ENCODE measurements at regions of chr1 and their contacts with region 1.

Region 1: GRCh38 chr1:202135221-202135721 is 9.3 kb downstream of the ARL8A start:
- DNase-seq: peak; percentile 71
- ATAC-seq: peak; percentile 94
- H3K4me3 ChIP-seq: no peak overlapping the region
- H3K4me3 Mint-ChIP-seq: no peak overlapping the region
- H3K27ac ChIP-seq: no peak overlapping the region
- H3K27ac Mint-ChIP-seq: no peak overlapping the region
- H3K4me1 ChIP-seq: no peaks in the 10 kb centered on the region
- H3K4me1 Mint-ChIP-seq: peaks cover 14% of the 10 kb centered on the region
- H3K27me3 ChIP-seq: no peaks in the 10 kb centered on the region
- H3K27me3 Mint-ChIP-seq: no peaks in the 10 kb centered on the region
- CTCF ChIP-seq: peak; percentile 87

Region 2: DNA sequence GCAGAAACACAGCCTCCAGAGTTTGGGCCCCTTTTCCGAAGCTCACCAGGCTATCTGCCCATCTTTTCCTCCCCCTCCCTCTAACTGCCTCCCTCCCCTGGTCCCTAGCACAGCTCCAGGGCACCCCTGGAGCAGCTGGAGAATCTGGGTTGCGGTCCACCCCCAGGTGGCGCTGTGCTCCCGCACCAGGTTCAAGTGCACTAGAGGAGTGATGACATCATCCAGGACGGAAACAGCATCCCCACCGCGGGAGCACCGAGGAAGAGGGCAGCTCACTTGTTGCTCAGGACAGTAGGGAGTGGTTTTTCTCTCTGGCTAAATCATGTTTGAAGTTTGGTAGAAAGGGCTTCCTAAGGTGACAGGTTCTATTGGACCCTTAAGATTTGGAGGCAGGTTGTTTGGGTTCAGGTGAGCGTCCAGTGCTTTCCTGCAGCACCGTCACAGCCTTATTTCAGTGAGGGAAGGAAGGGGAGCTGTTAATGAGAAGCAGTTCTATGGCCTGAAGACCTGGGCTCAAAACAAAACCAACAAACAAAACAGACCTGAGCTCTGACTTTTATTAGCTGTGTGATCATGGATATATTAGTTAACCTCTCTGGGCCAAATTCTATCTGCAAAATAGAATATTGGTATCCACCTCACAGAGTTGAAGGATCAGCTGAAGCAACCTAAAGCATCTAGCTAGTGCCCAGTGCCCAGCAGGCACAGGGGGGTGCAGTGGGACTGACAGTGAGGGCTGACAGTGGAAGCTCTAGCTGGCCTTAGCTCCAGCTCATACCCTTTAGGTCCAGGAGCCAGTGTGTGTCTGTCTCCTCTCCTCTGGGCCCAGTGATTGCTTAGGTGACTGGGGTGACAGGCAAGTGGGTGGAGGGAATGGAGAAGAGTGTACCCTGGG is 239.1 kb before region 1 on chr1:
- CTCF ChIA-PET with region 1: interaction called, 6 read pairs
- POLR2A ChIA-PET with region 1: no interaction called
- intact Hi-C with region 1: loop called (anchors 1 kb)
- DNase-seq: peak; percentile 72
- ATAC-seq: peak; percentile 64
- H3K4me3 ChIP-seq: no peak overlapping the region
- H3K4me3 Mint-ChIP-seq: peak overlapping the region; percentile 37
- H3K27ac ChIP-seq: no peak overlapping the region
- H3K27ac Mint-ChIP-seq: no peak overlapping the region
- H3K4me1 ChIP-seq: peaks cover 0 to 4% of the 10 kb centered on the region in 2 donors
- H3K4me1 Mint-ChIP-seq: peaks cover 5% of the 10 kb centered on the region
- H3K27me3 ChIP-seq: peaks cover 0 to 20% (median 2%) of the 10 kb centered on the region in 4 experiments
- H3K27me3 Mint-ChIP-seq: peaks cover 37% of the 10 kb centered on the region
- CTCF ChIP-seq: peak; percentile 76

Region 3: GRCh38 chr1:201999625-202000238 is 135.5 kb before region 1 on chr1:
- CTCF ChIA-PET with region 1: interaction called, 22 read pairs
- POLR2A ChIA-PET with region 1: no interaction called
- intact Hi-C with region 1: no loop called
- DNase-seq: peak; percentile 47
- ATAC-seq: peak; percentile 49
- H3K4me3 ChIP-seq: no peak overlapping the region
- H3K4me3 Mint-ChIP-seq: no peak overlapping the region
- H3K27ac ChIP-seq: no peak overlapping the region
- H3K27ac Mint-ChIP-seq: no peak overlapping the region
- H3K4me1 ChIP-seq: no peaks in the 10 kb centered on the region
- H3K4me1 Mint-ChIP-seq: no peaks in the 10 kb centered on the region
- H3K27me3 ChIP-seq: no peaks in the 10 kb centered on the region
- H3K27me3 Mint-ChIP-seq: no peaks in the 10 kb centered on the region
- CTCF ChIP-seq: peak; percentile 71

Region 4: GRCh38 chr1:202009326-202010179 is 125.7 kb before region 1 on chr1:
- CTCF ChIA-PET with region 1: interaction called, 19 read pairs
- POLR2A ChIA-PET with region 1: no interaction called
- intact Hi-C with region 1: loop called (anchors 1 kb)
- DNase-seq: peak; percentile 67
- ATAC-seq: peak; percentile 60
- H3K4me3 ChIP-seq: no peak overlapping the region
- H3K4me3 Mint-ChIP-seq: no peak overlapping the region
- H3K27ac ChIP-seq: no peak overlapping the region
- H3K27ac Mint-ChIP-seq: no peak overlapping the region
- H3K4me1 ChIP-seq: peaks cover 0 to 7% of the 10 kb centered on the region in 2 donors
- H3K4me1 Mint-ChIP-seq: peaks cover 2% of the 10 kb centered on the region
- H3K27me3 ChIP-seq: no peaks in the 10 kb centered on the region
- H3K27me3 Mint-ChIP-seq: no peaks in the 10 kb centered on the region
- CTCF ChIP-seq: peak; percentile 94

Region 5: DNA sequence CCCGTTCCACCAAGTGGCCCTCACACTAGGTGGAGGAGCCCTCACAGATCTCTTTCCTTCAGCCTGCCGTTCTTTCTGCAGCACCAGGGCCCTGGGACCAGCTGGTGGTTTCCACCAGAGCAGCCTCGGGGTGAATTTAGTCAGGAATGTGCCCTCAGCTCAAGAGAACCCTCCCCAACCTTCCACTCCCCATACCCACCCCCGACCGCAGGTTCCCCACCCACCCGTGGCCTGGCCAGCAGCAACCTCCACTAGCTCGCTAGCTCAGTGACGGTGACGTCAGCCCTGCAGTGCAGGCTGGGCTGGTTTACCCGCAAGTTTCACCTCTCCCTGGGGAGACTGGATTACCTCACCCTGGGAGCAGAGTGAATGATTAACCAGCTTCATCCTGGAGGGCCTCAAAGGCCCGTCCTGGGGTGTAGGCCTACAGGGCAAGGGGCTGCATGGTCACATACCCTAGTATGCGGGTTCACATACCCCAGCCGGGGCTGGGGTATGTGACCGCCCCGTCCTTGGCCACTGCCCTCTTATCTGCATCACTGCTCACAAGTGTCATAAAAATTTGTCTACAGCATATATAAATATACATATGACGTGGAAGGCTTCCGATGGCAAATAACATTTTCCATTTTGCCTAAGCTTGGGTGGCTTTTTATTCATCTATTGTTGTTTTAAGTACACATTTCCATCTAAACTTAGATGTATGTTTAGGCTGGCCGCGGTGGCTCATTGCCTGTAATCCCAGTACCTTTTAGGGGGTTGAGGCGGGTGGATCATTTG is 100.4 kb before region 1 on chr1:
- CTCF ChIA-PET with region 1: no interaction called
- POLR2A ChIA-PET with region 1: no interaction called
- intact Hi-C with region 1: no loop called
- DNase-seq: no peak
- ATAC-seq: no peak
- H3K4me3 ChIP-seq: no peak overlapping the region
- H3K4me3 Mint-ChIP-seq: no peak overlapping the region
- H3K27ac ChIP-seq: no peak overlapping the region
- H3K27ac Mint-ChIP-seq: no peak overlapping the region
- H3K4me1 ChIP-seq: no peaks in the 10 kb centered on the region
- H3K4me1 Mint-ChIP-seq: no peaks in the 10 kb centered on the region
- H3K27me3 ChIP-seq: no peaks in the 10 kb centered on the region
- H3K27me3 Mint-ChIP-seq: peaks cover 8% of the 10 kb centered on the region
- CTCF ChIP-seq: no peak